ENCODE measurements at regions of chr2 and their contacts with region 1.

Region 1: DNA sequence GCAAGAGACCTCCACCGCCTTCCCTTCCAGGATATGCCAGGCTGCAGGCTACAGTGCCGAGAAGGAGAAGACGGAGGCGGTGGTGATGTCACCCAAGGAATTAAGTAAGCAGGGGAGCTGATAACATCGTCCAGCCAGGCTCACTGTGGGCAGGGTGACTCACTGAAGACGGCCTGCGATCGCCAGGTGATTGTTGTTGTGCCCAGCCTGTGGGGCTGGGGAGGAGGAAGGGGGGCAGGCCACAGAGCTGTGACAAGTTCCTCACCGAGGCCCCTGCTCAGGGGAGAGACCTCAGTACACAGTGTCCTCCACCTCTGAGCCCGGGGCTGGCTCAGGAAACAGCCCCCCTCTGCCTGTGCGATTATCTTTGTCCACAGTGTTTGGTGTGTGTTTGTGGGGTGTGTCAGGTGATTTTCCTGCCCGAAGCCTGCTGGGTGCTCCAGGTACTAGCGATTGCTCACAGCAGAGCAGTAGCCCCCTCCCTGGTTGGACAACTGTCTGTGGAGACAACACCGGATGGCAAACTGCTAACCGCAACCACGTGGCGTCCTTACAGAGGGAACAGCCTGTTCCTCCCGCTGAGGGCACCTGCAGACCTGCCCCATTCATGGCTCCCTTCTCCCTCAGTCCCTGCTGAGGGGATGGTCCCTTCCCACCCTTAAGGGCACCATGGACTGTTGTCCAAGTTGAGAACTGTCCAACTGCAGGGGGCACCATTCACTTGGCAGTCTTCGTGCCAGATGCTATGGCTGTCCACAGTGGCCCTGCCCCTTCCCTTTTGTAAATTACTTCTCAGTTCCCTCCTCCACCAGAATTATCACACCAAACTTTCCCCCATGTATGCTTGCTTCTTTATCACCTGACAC is 95.1 kb downstream of the ZFP36L2 start:
- DNase-seq: peak; percentile 90
- ATAC-seq: peak; percentile 47
- H3K4me3 Mint-ChIP-seq: peak overlapping the region; percentile 8
- H3K27ac Mint-ChIP-seq: peak overlapping the region; percentile 70
- H3K4me1 Mint-ChIP-seq: peaks cover 88% of the 10 kb centered on the region
- H3K27me3 Mint-ChIP-seq: no peaks in the 10 kb centered on the region

Region 2: DNA sequence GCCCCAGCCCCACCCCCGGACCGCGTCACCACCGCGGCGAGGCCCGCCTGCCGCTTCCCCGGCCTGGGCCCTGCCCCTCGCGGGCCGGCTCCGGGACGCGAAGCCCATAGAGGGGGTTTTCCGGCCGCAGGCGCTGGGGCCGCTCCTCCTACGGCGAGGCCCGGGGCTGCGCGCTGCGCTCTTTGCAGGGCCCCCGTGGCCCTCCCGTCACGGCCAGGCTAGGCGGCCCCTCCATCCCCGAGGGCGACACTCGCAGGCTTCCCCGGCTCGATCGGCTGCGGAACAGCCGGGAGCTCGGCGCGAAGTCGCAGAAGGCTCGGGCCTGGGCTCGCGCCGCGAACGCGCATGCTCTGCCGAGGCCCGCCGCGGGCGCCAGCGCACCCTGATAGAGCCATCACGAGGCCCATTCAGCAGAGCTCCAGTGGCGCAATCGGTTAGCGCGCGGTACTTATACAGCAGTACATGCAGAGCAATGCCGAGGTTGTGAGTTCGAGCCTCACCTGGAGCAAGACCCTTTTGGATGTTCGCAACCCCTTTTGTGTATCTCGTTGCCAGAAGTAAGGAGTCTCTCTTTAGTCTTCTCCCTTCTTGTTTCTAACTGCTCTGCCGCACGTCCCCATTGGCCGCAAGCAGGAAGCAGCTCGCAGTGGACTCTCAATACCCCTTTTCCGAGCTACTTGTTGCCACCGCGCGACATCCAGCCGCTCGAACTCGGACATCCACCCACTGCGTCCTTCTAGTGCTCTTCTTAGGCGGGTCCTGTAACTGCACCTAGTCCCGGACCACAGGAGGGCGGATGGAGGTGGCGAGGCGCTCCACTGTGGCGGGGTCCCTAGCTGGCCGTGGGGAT is 320.9 kb before region 1 on chr2:
- CTCF ChIA-PET with region 1: no interaction called
- POLR2A ChIA-PET with region 1: no interaction called
- intact Hi-C with region 1: loop called in 1 of 2 experiments (anchors 2 kb)
- DNase-seq: peak; percentile 97
- ATAC-seq: peak; percentile 80
- H3K4me3 Mint-ChIP-seq: peak overlapping the region; percentile 94
- H3K27ac Mint-ChIP-seq: peak overlapping the region; percentile 98
- H3K4me1 Mint-ChIP-seq: peaks cover 17% of the 10 kb centered on the region
- H3K27me3 Mint-ChIP-seq: peaks cover 2% of the 10 kb centered on the region

Region 3: GRCh38 chr2:42974721-42975717 is 156.2 kb before region 1 on chr2:
- CTCF ChIA-PET with region 1: no interaction called
- POLR2A ChIA-PET with region 1: no interaction called
- intact Hi-C with region 1: loop called (anchors 5 to 10 kb)
- DNase-seq: peak; percentile 67
- ATAC-seq: peak; percentile 43
- H3K4me3 Mint-ChIP-seq: no peak overlapping the region
- H3K27ac Mint-ChIP-seq: no peak overlapping the region
- H3K4me1 Mint-ChIP-seq: peaks cover 13% of the 10 kb centered on the region
- H3K27me3 Mint-ChIP-seq: no peaks in the 10 kb centered on the region

Region 4: DNA sequence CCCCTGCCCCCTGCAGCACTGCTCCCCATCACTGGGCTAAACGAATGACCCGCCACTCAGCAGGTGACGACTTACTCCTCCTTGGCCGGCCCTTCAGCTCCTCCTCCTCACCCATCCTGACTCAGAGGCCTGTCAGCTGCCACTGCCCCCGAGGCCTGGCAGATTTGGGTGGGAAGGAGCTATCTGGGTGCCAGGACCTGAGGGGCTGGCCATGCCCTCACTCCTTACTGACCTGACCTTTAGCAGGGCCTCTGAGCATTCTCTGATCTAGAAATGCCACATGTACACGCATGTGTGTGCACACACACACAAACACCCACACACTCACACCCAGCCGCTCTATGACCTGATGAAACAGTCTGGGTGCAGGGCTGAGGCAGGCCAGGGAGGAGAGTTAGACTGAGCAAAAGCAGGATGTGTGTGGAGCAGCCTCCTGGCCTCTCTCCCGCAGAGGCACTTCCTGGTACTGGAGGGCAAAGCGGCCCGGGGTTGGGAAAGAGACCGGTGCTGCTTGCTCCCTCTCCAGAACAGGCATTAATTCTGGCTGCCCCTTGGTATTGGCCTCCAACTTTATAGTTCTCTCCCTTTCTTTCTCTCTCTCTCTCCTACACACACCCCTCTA is 27.1 kb after region 1 on chr2:
- CTCF ChIA-PET with region 1: interaction called, 3 read pairs
- POLR2A ChIA-PET with region 1: no interaction called
- intact Hi-C with region 1: loop called in 1 of 2 experiments (anchors 1 kb)
- DNase-seq: peak; percentile 88
- ATAC-seq: peak; percentile 70
- H3K4me3 Mint-ChIP-seq: peak overlapping the region; percentile 63
- H3K27ac Mint-ChIP-seq: peak overlapping the region; percentile 96
- H3K4me1 Mint-ChIP-seq: peaks cover 60% of the 10 kb centered on the region
- H3K27me3 Mint-ChIP-seq: no peaks in the 10 kb centered on the region

Region 5: DNA sequence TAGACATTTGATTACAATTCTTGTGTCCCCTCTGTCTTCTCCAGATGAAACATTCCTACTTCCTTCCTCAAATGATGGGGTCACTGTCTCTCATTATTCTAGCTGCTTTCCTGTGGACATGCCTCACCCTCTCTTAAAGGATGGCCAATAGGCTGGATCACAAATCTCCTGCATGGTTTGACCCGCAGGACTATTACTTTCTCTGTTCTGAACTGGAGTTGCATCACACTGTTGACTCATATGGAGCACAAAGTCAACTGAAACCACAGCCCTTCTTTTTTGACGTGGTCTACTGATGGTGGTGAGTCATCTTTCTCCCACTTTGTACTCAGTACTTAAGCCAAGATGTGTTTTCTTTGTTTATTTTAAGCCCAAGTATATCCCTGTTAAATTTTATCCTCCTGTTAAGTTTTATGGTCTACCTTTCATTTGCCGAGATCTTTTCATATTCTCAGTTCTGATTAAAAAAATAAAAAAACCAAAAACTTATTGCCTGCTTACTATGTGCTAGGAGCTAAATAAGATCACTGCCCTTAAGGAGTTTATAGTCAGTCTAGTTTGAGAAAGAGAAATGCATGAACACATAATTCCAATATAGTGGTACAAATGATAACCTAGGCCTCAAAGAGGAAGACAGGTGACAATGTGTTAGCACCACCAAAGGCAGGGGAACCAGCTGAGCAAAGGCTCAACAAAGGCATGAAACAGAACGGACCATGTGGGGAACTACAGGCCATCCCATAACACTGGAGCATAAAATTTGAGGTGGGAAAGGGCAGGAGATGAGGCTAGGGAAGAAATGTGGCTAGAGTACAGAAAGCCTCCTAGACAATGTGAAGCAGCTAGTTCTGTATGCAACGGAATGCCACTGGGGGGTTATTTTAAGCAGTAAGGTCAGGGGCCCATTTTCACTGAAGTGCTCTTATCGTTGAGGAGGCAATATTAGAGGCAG is 162.8 kb after region 1 on chr2:
- CTCF ChIA-PET with region 1: no interaction called
- POLR2A ChIA-PET with region 1: no interaction called
- intact Hi-C with region 1: loop called in 1 of 2 experiments (anchors 5 kb)
- DNase-seq: peak; percentile 49
- ATAC-seq: peak; percentile 98
- H3K4me3 Mint-ChIP-seq: peak overlapping the region; percentile 1
- H3K27ac Mint-ChIP-seq: peak overlapping the region; percentile 96
- H3K4me1 Mint-ChIP-seq: peaks cover 21% of the 10 kb centered on the region
- H3K27me3 Mint-ChIP-seq: no peaks in the 10 kb centered on the region

Region 6: GRCh38 chr2:43542285-43542937 is 411.2 kb after region 1 on chr2:
- CTCF ChIA-PET with region 1: interaction called, 8 read pairs
- POLR2A ChIA-PET with region 1: no interaction called
- intact Hi-C with region 1: loop called (anchors 1 to 2 kb)
- DNase-seq: no peak
- ATAC-seq: peak; percentile 60
- H3K4me3 Mint-ChIP-seq: no peak overlapping the region
- H3K27ac Mint-ChIP-seq: no peak overlapping the region
- H3K4me1 Mint-ChIP-seq: peaks cover 15% of the 10 kb centered on the region
- H3K27me3 Mint-ChIP-seq: no peaks in the 10 kb centered on the region

Measured in activated CD4-positive, alpha-beta T cell treated with anti-CD3 and anti-CD28 coated beads for 36 hours (primary cell).